Esophagus muscularis mucosa (tissue), 4 donors: ENCODE measurements at regions of chr2 and their contacts with region 1.

Region 1: GRCh38 chr2:11692966-11693521 is 23.0 kb upstream of the NTSR2 start:
- DNase-seq: no peak
- H3K4me3 ChIP-seq: no peak overlapping the region
- H3K27ac ChIP-seq: no peak overlapping the region
- H3K4me1 ChIP-seq: peaks cover 32 to 41% (median 36%) of the 10 kb centered on the region in 4 donors
- H3K27me3 ChIP-seq: no peaks in the 10 kb centered on the region
- CTCF ChIP-seq: peak; percentile 66 to 79 (median 79)
- EP300 ChIP-seq: no peak
- POLR2A ChIP-seq: no peak

Region 2: DNA sequence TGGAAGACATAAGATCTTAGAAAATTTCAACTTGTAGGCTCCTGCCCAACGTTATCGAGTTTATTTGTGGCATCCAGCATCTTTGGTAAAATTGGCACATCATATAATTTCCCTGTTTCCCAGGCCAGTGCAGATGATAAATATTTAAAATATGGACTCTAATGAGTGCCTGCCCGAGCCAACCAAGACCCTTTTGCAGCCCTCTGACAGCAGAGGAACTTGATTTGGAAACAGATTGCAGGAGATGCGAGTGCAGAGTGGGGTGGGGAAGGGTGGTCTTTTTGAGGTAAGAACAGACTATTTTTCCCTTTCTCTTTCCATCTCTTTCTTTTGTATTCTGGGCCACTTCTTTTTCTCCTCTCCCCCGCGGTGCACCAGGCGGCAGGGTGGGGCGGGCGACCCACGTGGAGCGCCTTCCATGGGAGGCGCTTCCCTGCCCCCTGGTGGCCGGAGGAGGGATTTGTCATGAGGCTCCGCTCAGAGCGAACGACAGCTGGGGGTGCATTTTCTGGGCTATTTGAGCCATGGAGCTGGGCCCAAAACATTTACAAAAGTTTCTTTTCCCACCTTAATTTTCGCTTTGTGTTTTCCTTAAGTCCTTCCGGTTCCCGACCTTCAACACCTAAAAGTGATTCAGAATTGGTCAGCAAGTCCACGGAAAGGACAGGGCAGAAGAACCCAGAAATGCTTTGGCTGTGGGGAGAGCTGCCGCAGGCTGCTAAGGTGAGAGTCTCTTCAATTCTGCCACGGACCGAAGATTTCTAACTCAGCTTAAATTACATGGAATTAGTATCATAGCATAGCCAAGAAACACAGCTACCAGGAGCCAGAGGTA is 86.1 kb after region 1 on chr2:
- intact Hi-C with region 1: loop called (anchors 2 kb)
- DNase-seq: peak; percentile 94
- H3K4me3 ChIP-seq: peak overlapping the region in 3 of 4 donors; percentile 12 to 24 (median 18)
- H3K27ac ChIP-seq: no peak overlapping the region
- H3K4me1 ChIP-seq: peaks cover 8 to 29% (median 18%) of the 10 kb centered on the region in 4 donors
- H3K27me3 ChIP-seq: no peaks in the 10 kb centered on the region
- CTCF ChIP-seq: peak; percentile 98 to 99 (median 99)
- EP300 ChIP-seq: no peak
- POLR2A ChIP-seq: no peak

Region 3: GRCh38 chr2:12155303-12156051 is 462.4 kb after region 1 on chr2:
- intact Hi-C with region 1: no loop called
- DNase-seq: no peak
- H3K4me3 ChIP-seq: no peak overlapping the region
- H3K27ac ChIP-seq: peak overlapping the region in 3 of 4 donors; percentile 22 to 44 (median 41)
- H3K4me1 ChIP-seq: peaks cover 12 to 20% (median 18%) of the 10 kb centered on the region in 4 donors
- H3K27me3 ChIP-seq: no peaks in the 10 kb centered on the region
- CTCF ChIP-seq: no peak
- EP300 ChIP-seq: no peak
- POLR2A ChIP-seq: no peak